Activated T-helper 2 cell treated with anti-CD3 and anti-CD28 coated beads, Interferon-gamma antibody, Interleukin-2, Interleukin-4, amounts not matched to agents 10 μg/mL and 5 μg/mL and 100 μg/mL, durations not matched to agents 14 hours and 24 hours and 36 hours (primary cell): ENCODE measurements at regions of chr19 and their contacts with region 1.

Region 1: GRCh38 chr19:6862673-6863078 is 24.7 kb upstream of the ADGRE1 start:
- DNase-seq: peak; percentile 87
- H3K4me3 Mint-ChIP-seq: peak overlapping the region; percentile 72
- H3K27ac Mint-ChIP-seq: peak overlapping the region; percentile 66
- H3K4me1 Mint-ChIP-seq: peaks cover 12% of the 10 kb centered on the region
- H3K27me3 Mint-ChIP-seq: no peaks in the 10 kb centered on the region

Region 2: DNA sequence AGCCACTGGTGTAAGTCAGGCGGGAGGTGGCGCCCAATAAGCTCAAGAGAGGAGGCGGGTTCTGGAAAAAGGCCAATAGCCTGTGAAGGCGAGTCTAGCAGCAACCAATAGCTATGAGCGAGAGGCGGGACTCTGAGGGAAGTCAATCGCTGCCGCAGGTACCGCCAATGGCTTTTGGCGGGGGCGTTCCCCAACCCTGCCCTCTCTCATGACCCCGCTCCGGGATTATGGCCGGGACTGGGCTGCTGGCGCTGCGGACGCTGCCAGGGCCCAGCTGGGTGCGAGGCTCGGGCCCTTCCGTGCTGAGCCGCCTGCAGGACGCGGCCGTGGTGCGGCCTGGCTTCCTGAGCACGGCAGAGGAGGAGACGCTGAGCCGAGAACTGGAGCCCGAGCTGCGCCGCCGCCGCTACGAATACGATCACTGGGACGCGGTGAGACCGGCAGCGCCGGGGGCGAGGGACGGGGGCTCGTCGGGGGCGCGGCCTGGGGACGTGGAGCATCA is 490.0 kb before region 1 on chr19 and contains the start of gene ALKBH7:
- intact Hi-C with region 1: loop called (anchors 5 kb)
- DNase-seq: peak; percentile 95
- H3K4me3 Mint-ChIP-seq: peak within 1 kb of the TSS; percentile 87
- H3K27ac Mint-ChIP-seq: peak within 1 kb of the TSS; percentile 88
- H3K4me1 Mint-ChIP-seq: peaks cover 8% of the 10 kb centered on the region
- H3K27me3 Mint-ChIP-seq: no peaks in the 10 kb centered on the region
- total RNA-seq, gene ALKBH7: 33.0 and 35.9 TPM in 2 replicates

Region 3: DNA sequence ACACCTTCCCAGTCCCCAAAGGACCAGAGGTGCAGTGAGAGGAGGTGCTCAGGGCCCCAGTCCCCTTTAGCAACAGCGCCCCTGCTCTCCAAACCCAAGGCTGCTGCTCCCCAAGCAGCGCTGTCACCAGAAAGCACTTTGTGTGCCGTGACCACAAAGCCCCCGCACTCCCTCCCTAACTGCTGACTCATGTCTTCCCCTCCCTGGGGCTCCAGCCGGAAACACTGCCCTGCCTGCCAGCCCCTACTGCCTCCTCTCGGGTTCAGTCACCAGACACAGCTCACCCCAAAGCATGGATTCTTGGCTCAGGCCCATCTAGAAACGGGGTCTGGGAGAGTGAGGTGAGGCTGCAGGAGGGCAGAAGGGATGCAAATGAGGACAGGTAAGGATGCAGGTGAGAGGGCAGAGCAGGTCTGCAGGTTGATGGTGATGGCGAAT is 187.8 kb before region 1 on chr19:
- intact Hi-C with region 1: loop called (anchors 2 kb)
- DNase-seq: peak; percentile 90
- H3K4me3 Mint-ChIP-seq: peak overlapping the region; percentile 72
- H3K27ac Mint-ChIP-seq: peak overlapping the region; percentile 89
- H3K4me1 Mint-ChIP-seq: peaks cover 61% of the 10 kb centered on the region
- H3K27me3 Mint-ChIP-seq: no peaks in the 10 kb centered on the region

Region 4: DNA sequence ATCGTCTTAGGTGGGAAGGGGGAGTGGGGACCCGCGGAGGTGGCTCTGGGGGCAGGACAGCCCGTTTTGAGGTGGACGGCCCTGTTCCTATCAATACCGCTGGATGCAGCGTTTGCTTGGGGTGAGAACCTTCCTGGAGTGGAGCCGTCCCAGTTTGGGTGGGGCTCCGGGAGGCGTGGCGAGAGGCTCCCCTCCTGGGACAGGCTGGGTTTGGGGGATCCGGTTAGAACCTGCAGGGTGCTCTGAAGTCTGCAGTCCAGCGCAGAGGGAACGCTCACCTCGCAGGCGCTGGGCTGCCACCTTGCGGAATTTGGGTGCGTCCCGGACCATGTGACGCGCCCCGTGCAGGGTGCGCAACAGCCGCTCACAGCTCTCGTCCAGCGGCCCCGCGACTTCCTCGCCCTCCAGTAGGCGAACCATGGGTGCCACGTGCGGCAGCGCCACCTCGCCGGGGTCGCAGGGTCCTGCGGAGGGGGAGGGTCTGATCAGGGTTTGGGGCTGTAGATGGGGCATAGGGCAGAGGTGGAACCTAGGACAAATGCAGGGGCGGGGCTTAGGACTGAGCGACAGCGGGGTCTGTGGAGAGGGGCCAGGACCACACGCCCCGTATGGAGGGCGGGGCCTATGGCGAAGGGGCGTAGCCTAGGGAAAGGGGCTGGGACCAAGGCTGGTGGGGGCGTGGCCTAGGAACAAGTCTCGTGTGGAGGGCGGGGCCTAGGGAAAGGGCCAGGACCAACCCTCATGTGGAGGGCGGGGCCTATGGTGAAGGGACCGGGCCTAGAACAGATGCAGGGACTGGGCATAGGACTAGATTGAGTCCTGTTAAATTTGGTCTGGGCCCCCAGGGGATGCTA is 109.3 kb before region 1 on chr19:
- intact Hi-C with region 1: loop called (anchors 1 kb)
- DNase-seq: peak; percentile 79
- H3K4me3 Mint-ChIP-seq: peak overlapping the region; percentile 70
- H3K27ac Mint-ChIP-seq: peak overlapping the region; percentile 92
- H3K4me1 Mint-ChIP-seq: peaks cover 3% of the 10 kb centered on the region
- H3K27me3 Mint-ChIP-seq: no peaks in the 10 kb centered on the region

Region 5: DNA sequence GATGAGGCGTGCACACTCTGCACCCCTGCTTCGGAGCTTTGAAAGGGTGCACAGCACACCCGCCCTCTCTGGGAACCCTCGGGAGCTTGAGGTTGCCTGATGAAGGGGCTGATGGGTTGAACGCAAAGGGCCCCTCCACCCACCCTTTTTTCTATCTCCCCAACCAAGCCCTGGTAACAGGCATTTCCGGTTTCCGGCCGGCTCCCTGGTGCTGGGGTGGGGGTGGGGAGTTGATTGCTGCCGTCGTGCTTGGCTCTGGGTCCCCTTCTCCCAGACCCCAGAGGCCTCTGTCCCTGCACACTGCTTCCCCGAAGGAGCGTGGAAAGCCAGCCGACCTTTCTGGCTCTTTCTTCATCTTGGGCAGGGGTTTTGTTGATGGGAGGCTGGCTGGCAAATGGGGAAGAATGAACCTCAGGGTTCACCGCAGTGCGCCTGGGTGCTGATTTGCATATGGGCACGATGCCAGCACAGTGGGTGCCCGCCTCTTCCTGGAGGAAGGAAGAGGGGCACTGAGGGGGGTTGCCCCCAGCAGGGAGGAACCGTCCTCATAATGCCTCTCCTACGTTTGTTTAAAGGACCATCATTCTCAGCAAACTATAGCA is 61.1 kb before region 1 on chr19:
- intact Hi-C with region 1: loop called (anchors 1 kb)
- DNase-seq: peak; percentile 75
- H3K4me3 Mint-ChIP-seq: peak overlapping the region; percentile 85
- H3K27ac Mint-ChIP-seq: peak overlapping the region; percentile 97
- H3K4me1 Mint-ChIP-seq: peaks cover 46% of the 10 kb centered on the region
- H3K27me3 Mint-ChIP-seq: no peaks in the 10 kb centered on the region

Region 6: DNA sequence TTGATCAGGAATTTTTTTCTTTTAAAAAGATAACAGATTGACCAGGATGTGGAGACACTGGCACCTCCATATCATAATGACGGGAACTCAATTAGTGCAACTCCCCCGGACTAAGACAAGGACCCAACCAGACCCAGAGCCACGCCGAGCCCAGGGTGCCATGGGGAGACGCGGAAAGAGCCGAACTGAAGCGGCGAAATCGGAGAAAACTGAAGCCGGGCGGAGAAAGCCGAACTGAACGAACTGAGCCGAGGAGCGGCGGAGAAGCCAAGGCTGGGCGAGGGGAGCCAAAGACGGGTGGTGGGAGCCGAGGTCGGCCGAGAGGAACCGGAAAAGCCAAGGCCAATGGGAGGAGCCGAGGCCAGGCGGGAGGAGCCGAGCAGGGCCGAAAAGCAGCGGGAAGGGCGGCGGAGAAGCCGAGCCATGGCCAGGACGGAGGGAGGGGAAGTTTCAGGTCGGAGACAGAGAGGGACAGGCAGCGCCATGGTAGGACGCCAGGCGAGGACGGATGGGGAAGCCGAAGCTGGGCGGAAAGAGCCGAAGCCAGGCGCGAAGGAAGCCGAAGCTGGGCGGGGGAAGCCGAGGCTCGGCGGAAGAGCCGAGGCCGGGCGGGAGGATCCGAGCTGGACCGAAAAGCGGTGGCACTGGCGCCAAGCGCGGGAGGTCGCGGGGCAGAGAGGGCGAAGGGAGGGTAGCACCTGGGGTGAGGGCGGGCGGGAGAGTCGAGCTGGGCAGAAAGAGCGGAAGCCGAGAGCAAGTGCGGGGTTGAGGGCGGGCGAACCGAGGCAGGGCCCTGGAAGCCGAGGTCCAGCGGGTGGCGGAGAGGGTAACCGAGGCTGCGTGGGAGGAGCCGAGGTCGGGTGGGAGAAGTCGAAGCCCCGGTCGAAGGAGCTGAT is 236.3 kb after region 1 on chr19:
- intact Hi-C with region 1: no loop called
- DNase-seq: peak; percentile 86
- H3K4me3 Mint-ChIP-seq: peak overlapping the region; percentile 89
- H3K27ac Mint-ChIP-seq: peak overlapping the region; percentile 88
- H3K4me1 Mint-ChIP-seq: peaks cover 19% of the 10 kb centered on the region
- H3K27me3 Mint-ChIP-seq: peaks cover 10% of the 10 kb centered on the region

Region 7: DNA sequence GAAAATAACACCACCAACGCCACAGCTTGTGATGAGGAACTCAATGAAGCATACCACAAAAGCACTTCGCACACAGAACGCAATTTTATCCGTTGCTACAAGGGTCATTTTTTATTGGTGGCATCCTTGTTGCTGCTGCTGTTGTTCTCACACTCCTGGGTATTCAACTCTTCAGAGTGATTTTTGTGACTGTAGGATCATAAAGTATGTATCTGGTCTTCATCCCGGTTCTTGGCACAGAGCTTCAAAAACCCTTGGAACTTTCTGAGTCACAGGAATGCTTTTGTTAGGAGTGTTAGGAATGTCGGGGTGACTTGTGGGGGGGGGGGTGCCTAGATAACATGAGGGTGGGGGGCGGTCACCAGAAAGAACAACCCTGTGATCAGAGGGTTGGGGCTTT is 315.2 kb after region 1 on chr19:
- intact Hi-C with region 1: no loop called
- DNase-seq: no peak
- H3K4me3 Mint-ChIP-seq: no peak overlapping the region
- H3K27ac Mint-ChIP-seq: no peak overlapping the region
- H3K4me1 Mint-ChIP-seq: peaks cover 13% of the 10 kb centered on the region
- H3K27me3 Mint-ChIP-seq: no peaks in the 10 kb centered on the region